ENCODE measurements at regions of chr19 and their contacts with region 1.

Region 1: DNA sequence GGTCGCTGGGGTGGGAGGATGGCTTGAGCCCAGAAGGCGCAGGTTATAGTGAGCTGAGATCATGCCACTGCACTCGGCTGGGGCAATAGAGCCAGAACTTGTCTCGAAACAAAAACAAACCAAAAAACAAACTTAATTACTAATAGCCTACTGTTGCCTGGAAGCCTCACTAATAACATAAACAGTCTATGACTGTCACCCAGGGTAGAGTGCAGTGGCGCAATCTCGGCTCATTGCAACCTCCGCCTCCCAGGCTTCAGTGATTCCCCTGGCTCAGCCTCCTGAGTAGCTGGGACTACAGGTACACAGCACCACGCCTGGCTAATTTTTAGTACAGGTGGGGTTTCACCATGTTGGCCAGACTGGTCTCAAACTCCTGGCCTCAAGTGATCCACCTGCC is 18.0 kb downstream of the CATSPERD start:
- DNase-seq: no peak
- ATAC-seq: no peak
- H3K4me3 ChIP-seq: no peak overlapping the region
- H3K27ac ChIP-seq: no peak overlapping the region
- H3K4me1 ChIP-seq: no peaks in the 10 kb centered on the region
- H3K27me3 ChIP-seq: no peaks in the 10 kb centered on the region
- CTCF ChIP-seq: no peak
- POLR2A ChIP-seq: no peak
- RAD21 ChIP-seq: no peak

Region 2: GRCh38 chr19:5753743-5754142 is 15.3 kb after region 1 on chr19:
- CTCF ChIA-PET with region 1: no interaction called
- POLR2A ChIA-PET with region 1: no interaction called
- RAD21 ChIA-PET with region 1: interaction called in 1 of 2 experiments, 3 read pairs
- intact Hi-C with region 1: loop called (anchors 1 kb)
- DNase-seq: no peak
- ATAC-seq: no peak
- H3K4me3 ChIP-seq: no peak overlapping the region
- H3K27ac ChIP-seq: no peak overlapping the region
- H3K4me1 ChIP-seq: no peaks in the 10 kb centered on the region
- H3K27me3 ChIP-seq: no peaks in the 10 kb centered on the region
- CTCF ChIP-seq: no peak
- POLR2A ChIP-seq: no peak
- RAD21 ChIP-seq: no peak